ENCODE measurements at regions of chr11 and their contacts with region 1.

Region 1: GRCh38 chr11:59135648-59136461 is 6.8 kb upstream of the FAM111A start:
- DNase-seq: peak; percentile 82 to 88 (median 83)
- H3K4me3 ChIP-seq: no peak overlapping the region
- H3K4me3 Mint-ChIP-seq: peak overlapping the region in 7 of 8 donors; percentile 18 to 87 (median 68)
- H3K27ac ChIP-seq: no peak overlapping the region
- H3K27ac Mint-ChIP-seq: peak overlapping the region; percentile 5 to 92 (median 88)
- H3K4me1 ChIP-seq: peaks cover 8% of the 10 kb centered on the region
- H3K4me1 Mint-ChIP-seq: peaks cover 7 to 12% (median 8%) of the 10 kb centered on the region in 4 donors
- H3K27me3 ChIP-seq: no peaks in the 10 kb centered on the region
- H3K27me3 Mint-ChIP-seq: no peaks in the 10 kb centered on the region

Region 2: DNA sequence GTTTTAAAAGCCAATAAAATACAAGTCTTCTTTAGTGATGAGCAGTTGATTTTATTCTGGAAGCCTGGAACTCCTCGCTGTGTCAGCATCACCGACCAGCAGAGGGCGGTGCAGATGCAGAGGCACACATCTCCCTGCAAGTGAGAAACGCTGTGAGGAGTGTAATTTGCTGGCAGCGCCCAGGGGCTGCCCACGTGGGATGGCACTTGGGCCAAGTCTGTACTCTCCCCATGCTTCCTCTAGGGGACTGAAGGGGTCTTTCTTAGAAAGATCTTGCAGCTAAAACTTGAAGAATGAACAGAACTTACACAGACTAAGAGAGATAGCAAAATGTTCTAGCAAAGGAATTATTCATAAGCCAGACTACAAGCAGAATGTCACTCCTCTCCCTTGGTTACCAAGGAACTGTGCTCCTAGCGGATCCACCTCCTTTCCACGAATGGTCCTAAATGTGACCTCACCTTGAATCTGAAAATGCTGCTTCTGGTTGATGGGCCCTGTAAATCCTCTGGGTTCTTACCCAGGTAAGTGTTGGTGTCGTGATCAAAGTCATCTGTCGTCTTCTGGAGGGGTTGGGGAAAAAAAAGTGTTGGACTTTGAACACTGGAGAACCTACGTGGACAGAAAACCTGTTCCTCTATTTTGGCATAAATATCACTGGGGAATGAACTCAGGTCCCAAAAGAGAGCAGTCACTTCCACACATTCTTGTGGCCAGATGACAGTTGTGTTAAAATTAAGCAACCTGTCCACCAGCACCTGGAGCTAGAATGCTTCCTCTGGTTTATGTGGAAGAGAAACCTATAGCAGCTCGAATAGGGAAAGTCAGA is 481.6 kb before region 1 on chr11:
- CTCF ChIA-PET with region 1: interaction called, 21 read pairs
- POLR2A ChIA-PET with region 1: no interaction called
- intact Hi-C with region 1: loop called (anchors 1 kb)
- DNase-seq: peak; percentile 63 to 72 (median 66)
- H3K4me3 ChIP-seq: no peak overlapping the region
- H3K4me3 Mint-ChIP-seq: no peak overlapping the region
- H3K27ac ChIP-seq: no peak overlapping the region
- H3K27ac Mint-ChIP-seq: peak overlapping the region in 1 of 7 donors; percentile 11
- H3K4me1 ChIP-seq: no peaks in the 10 kb centered on the region
- H3K4me1 Mint-ChIP-seq: peaks cover 0 to 2% (median under 1%) of the 10 kb centered on the region in 4 donors
- H3K27me3 ChIP-seq: no peaks in the 10 kb centered on the region
- H3K27me3 Mint-ChIP-seq: peaks cover 0 to 5% of the 10 kb centered on the region in 2 donors

Region 3: GRCh38 chr11:58999291-58999680 is 136.6 kb before region 1 on chr11:
- CTCF ChIA-PET with region 1: no interaction called
- POLR2A ChIA-PET with region 1: no interaction called
- intact Hi-C with region 1: no loop called
- DNase-seq: no peak
- H3K4me3 ChIP-seq: no peak overlapping the region
- H3K4me3 Mint-ChIP-seq: no peak overlapping the region
- H3K27ac ChIP-seq: no peak overlapping the region
- H3K27ac Mint-ChIP-seq: no peak overlapping the region
- H3K4me1 ChIP-seq: no peaks in the 10 kb centered on the region
- H3K4me1 Mint-ChIP-seq: no peaks in the 10 kb centered on the region
- H3K27me3 ChIP-seq: no peaks in the 10 kb centered on the region
- H3K27me3 Mint-ChIP-seq: peaks cover 10 to 21% of the 10 kb centered on the region in 2 donors

Region 4: DNA sequence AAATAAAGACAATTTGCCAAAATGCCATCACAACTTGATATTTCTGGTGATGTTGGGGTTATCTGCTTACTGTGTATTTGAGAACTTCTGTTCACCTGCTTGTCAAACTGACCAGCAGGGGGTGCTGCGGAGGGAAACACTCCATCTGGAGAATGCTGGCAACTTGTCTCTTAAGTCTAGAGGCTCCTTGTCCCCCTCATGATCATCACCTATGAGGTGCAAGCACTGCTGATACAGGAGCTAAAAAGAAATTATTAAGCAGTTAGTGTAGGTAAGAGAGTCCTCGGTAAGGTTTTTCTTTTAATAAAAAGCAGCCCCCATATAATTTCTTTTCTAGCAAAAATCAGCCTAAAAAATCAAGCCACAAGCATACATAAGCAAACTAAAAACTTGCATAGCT is 82.5 kb before region 1 on chr11:
- CTCF ChIA-PET with region 1: interaction called, 62 read pairs
- POLR2A ChIA-PET with region 1: no interaction called
- intact Hi-C with region 1: loop called (anchors 1 kb)
- DNase-seq: peak; percentile 63 to 77 (median 71)
- H3K4me3 ChIP-seq: no peak overlapping the region
- H3K4me3 Mint-ChIP-seq: no peak overlapping the region
- H3K27ac ChIP-seq: no peak overlapping the region
- H3K27ac Mint-ChIP-seq: no peak overlapping the region
- H3K4me1 ChIP-seq: peaks cover 6% of the 10 kb centered on the region
- H3K4me1 Mint-ChIP-seq: peaks cover 4 to 7% (median 5%) of the 10 kb centered on the region in 4 donors
- H3K27me3 ChIP-seq: no peaks in the 10 kb centered on the region
- H3K27me3 Mint-ChIP-seq: peaks cover 14 to 25% of the 10 kb centered on the region in 2 donors

Region 5: GRCh38 chr11:59106363-59107336 is 29.2 kb before region 1 on chr11 and contains the start of gene FAM111B:
- CTCF ChIA-PET with region 1: interaction called, 24 read pairs
- POLR2A ChIA-PET with region 1: interaction called, 3 read pairs
- intact Hi-C with region 1: no loop called
- DNase-seq: peak; percentile 57 to 80 (median 62)
- H3K4me3 ChIP-seq: peak within 1 kb of the TSS; percentile 36 to 70
- H3K4me3 Mint-ChIP-seq: peak within 1 kb of the TSS; percentile 89 to 94 (median 92)
- H3K27ac ChIP-seq: peak within 1 kb of the TSS; percentile 30
- H3K27ac Mint-ChIP-seq: peak within 1 kb of the TSS; percentile 63 to 94 (median 86)
- H3K4me1 ChIP-seq: peaks cover 19% of the 10 kb centered on the region
- H3K4me1 Mint-ChIP-seq: peaks cover 27 to 41% (median 32%) of the 10 kb centered on the region in 4 donors
- H3K27me3 ChIP-seq: no peaks in the 10 kb centered on the region
- H3K27me3 Mint-ChIP-seq: no peaks in the 10 kb centered on the region
- total RNA-seq, gene FAM111B: 0.23 to 0.53 TPM

Region 6: GRCh38 chr11:59158206-59159068 is 22.6 kb after region 1 on chr11:
- CTCF ChIA-PET with region 1: interaction called, 57 read pairs
- POLR2A ChIA-PET with region 1: interaction called, 5 read pairs
- intact Hi-C with region 1: no loop called
- DNase-seq: peak; percentile 65 to 73 (median 68)
- H3K4me3 ChIP-seq: no peak overlapping the region
- H3K4me3 Mint-ChIP-seq: no peak overlapping the region
- H3K27ac ChIP-seq: no peak overlapping the region
- H3K27ac Mint-ChIP-seq: peak overlapping the region in 3 of 7 donors; percentile 36 to 90 (median 66)
- H3K4me1 ChIP-seq: peaks cover 3% of the 10 kb centered on the region
- H3K4me1 Mint-ChIP-seq: peaks cover 2 to 8% (median 5%) of the 10 kb centered on the region in 4 donors
- H3K27me3 ChIP-seq: no peaks in the 10 kb centered on the region
- H3K27me3 Mint-ChIP-seq: peaks cover 10 to 14% of the 10 kb centered on the region in 2 donors

Region 7: DNA sequence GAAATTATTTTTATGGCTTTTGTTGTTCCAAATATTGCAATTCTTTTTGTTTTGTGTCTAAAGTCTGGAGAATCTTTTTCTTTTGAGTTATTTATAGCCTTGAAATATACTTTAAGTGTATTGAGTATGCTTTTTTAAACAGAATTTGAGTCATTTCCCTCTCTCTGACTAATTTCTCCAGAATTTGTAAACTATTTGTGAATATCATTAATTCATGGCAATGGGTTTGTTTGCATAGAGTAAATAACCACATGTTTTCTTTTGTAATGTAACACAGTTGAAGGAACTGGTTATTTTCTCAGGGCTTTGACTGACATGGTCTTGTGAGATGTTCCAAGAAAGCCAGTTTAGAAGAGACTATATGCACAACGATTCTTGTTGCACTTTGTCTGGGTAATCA is 107.8 kb after region 1 on chr11:
- CTCF ChIA-PET with region 1: no interaction called
- POLR2A ChIA-PET with region 1: no interaction called
- intact Hi-C with region 1: no loop called
- DNase-seq: no peak
- H3K4me3 ChIP-seq: no peak overlapping the region
- H3K4me3 Mint-ChIP-seq: no peak overlapping the region
- H3K27ac ChIP-seq: no peak overlapping the region
- H3K27ac Mint-ChIP-seq: no peak overlapping the region
- H3K4me1 ChIP-seq: peaks cover 22% of the 10 kb centered on the region
- H3K4me1 Mint-ChIP-seq: peaks cover 14 to 29% (median 23%) of the 10 kb centered on the region in 4 donors
- H3K27me3 ChIP-seq: no peaks in the 10 kb centered on the region
- H3K27me3 Mint-ChIP-seq: peaks cover 0 to 3% of the 10 kb centered on the region in 2 donors

Measured in CD4-positive, alpha-beta memory T cell (primary cell).